Endothelial cell of umbilical vein (primary cell): ENCODE measurements at regions of chrX and their contacts with region 1.

Region 1: GRCh38 chrX:1453951-1454785 is 1.5 kb upstream of the ASMTL start:
- DNase-seq: peak; percentile 88
- H3K4me3 ChIP-seq: peak overlapping the region in 1 of 3 experiments; percentile 73
- H3K27ac ChIP-seq: no peak overlapping the region
- H3K4me1 ChIP-seq: peaks cover 2% of the 10 kb centered on the region
- H3K27me3 ChIP-seq: no peaks in the 10 kb centered on the region
- CTCF ChIP-seq: peak; percentile 92 to 97
- POLR2A ChIP-seq: no peak

Region 2: GRCh38 chrX:1323315-1323714 is 130.9 kb before region 1 on chrX:
- CTCF ChIA-PET with region 1: no interaction called
- POLR2A ChIA-PET with region 1: no interaction called
- dilution Hi-C with region 1: no loop called
- intact Hi-C with region 1: loop called (anchors 1 kb)
- DNase-seq: peak; percentile 72
- H3K4me3 ChIP-seq: no peak overlapping the region
- H3K27ac ChIP-seq: no peak overlapping the region
- H3K4me1 ChIP-seq: no peaks in the 10 kb centered on the region
- H3K27me3 ChIP-seq: no peaks in the 10 kb centered on the region
- CTCF ChIP-seq: peak; percentile 40 to 72
- POLR2A ChIP-seq: no peak

Region 3: GRCh38 chrX:1420371-1420770 is 33.8 kb before region 1 on chrX:
- CTCF ChIA-PET with region 1: no interaction called
- POLR2A ChIA-PET with region 1: no interaction called
- dilution Hi-C with region 1: no loop called
- intact Hi-C with region 1: no loop called
- DNase-seq: no peak
- H3K4me3 ChIP-seq: no peak overlapping the region
- H3K27ac ChIP-seq: no peak overlapping the region
- H3K4me1 ChIP-seq: no peaks in the 10 kb centered on the region
- H3K27me3 ChIP-seq: no peaks in the 10 kb centered on the region
- CTCF ChIP-seq: no peak
- POLR2A ChIP-seq: no peak

Region 4: GRCh38 chrX:1580735-1581531 is 126.8 kb after region 1 on chrX:
- CTCF ChIA-PET with region 1: no interaction called
- POLR2A ChIA-PET with region 1: no interaction called
- dilution Hi-C with region 1: no loop called
- intact Hi-C with region 1: loop called (anchors 1 kb)
- DNase-seq: peak; percentile 64
- H3K4me3 ChIP-seq: no peak overlapping the region
- H3K27ac ChIP-seq: no peak overlapping the region
- H3K4me1 ChIP-seq: no peaks in the 10 kb centered on the region
- H3K27me3 ChIP-seq: no peaks in the 10 kb centered on the region
- CTCF ChIP-seq: peak; percentile 69 to 83
- POLR2A ChIP-seq: no peak

Region 5: DNA sequence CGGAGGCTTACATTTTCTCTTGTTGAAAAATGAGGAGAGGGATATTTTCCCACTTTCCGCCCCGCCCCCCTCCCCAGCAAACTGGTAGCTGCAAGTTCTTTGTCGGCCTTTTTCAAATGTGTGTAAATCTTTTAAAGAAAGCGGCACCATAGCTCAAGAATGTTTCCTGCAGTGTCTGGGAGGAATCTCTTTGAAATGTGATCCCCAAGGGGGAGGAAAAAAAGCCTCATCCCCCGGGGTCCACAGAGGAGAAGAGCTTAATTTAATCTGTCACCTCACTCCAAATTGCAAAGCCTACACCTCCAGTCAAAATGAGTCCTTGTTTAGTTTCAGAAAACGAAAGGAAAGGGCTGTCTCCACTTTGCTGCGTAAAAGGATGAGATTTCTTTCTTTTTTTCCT is 195.5 kb after region 1 on chrX:
- CTCF ChIA-PET with region 1: no interaction called
- POLR2A ChIA-PET with region 1: no interaction called
- dilution Hi-C with region 1: no loop called
- intact Hi-C with region 1: loop called (anchors 1 kb)
- DNase-seq: no peak
- H3K4me3 ChIP-seq: no peak overlapping the region
- H3K27ac ChIP-seq: no peak overlapping the region
- H3K4me1 ChIP-seq: no peaks in the 10 kb centered on the region
- H3K27me3 ChIP-seq: no peaks in the 10 kb centered on the region
- CTCF ChIP-seq: no peak
- POLR2A ChIP-seq: no peak

Region 6: DNA sequence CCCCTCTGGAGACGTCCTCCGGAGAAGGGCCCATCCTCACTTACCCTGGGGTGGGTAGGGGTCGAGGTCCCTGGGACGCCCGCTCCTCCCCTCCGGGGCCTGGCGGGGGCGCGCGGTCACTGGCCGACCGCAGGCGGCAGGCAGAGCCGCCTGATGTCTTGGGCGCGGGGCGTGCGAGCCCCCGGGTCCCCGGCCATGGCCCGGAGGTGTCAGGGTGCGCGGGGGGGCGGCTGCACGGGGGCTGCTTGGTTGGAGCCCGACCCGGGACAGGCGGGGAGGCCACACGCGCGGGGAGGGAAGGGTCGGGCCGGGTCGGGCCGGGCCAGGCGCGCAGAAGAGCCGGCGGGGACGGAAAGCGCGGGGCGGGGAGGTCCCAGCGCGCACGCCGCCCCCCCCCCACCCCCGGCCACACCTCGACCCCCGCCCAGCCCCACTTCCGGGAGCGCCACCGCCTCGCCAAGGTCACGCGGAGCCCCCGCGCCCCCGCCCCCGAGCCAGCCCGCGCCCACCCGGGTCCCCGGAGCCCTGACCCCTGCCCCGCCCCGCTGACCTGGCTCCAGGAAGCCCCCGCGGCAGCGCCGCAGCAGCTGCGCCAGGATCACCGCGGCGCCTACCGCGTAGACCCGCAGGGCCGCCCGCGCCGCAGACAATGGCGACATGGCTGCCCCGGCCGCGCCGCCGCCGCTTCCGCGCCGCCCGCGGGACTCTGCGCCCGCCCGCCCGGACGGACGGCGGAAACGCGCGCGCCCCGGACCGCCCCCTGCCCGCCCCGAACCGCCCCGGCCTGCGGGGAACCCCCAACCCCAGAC is 1046.3 kb after region 1 on chrX and contains the starts of genes DHRSX and ZBED1:
- CTCF ChIA-PET with region 1: no interaction called
- POLR2A ChIA-PET with region 1: no interaction called
- dilution Hi-C with region 1: no loop called
- intact Hi-C with region 1: loop called (anchors 5 kb)
- DNase-seq: peak; percentile 49
- H3K4me3 ChIP-seq: peak within 1 kb of the TSS; percentile 83 to 93 (median 84)
- H3K27ac ChIP-seq: peak within 1 kb of the TSS; percentile 54
- H3K4me1 ChIP-seq: peaks cover 13% of the 10 kb centered on the region
- H3K27me3 ChIP-seq: no peaks in the 10 kb centered on the region
- CTCF ChIP-seq: peak in 1 of 2 donors; percentile 33
- POLR2A ChIP-seq: peak; percentile 77
- total RNA-seq, gene DHRSX: 27.1 and 29.3 TPM in 2 replicates
- total RNA-seq, gene ZBED1: 43.7 and 46.5 TPM in 2 replicates

Region 7: GRCh38 chrX:2595258-2595657 is 1141.1 kb after region 1 on chrX:
- CTCF ChIA-PET with region 1: no interaction called
- POLR2A ChIA-PET with region 1: no interaction called
- dilution Hi-C with region 1: no loop called
- intact Hi-C with region 1: loop called (anchors 1 kb)
- DNase-seq: no peak
- H3K4me3 ChIP-seq: no peak overlapping the region
- H3K27ac ChIP-seq: no peak overlapping the region
- H3K4me1 ChIP-seq: no peaks in the 10 kb centered on the region
- H3K27me3 ChIP-seq: no peaks in the 10 kb centered on the region
- CTCF ChIP-seq: no peak
- POLR2A ChIP-seq: no peak

Region 8: GRCh38 chrX:2690856-2691542 is 1236.8 kb after region 1 on chrX and contains the start of gene CD99:
- CTCF ChIA-PET with region 1: no interaction called
- POLR2A ChIA-PET with region 1: no interaction called
- dilution Hi-C with region 1: no loop called
- intact Hi-C with region 1: loop called (anchors 1 kb)
- DNase-seq: peak; percentile 91
- H3K4me3 ChIP-seq: peak within 1 kb of the TSS; percentile 76 to 100 (median 92)
- H3K27ac ChIP-seq: peak within 1 kb of the TSS; percentile 76
- H3K4me1 ChIP-seq: peaks cover 38% of the 10 kb centered on the region
- H3K27me3 ChIP-seq: no peaks in the 10 kb centered on the region
- CTCF ChIP-seq: no peak
- POLR2A ChIP-seq: peak; percentile 72
- total RNA-seq, gene CD99: 641 and 654 TPM in 2 replicates